ENCODE measurements at regions of chr1 and their contacts with region 1.

Region 1: DNA sequence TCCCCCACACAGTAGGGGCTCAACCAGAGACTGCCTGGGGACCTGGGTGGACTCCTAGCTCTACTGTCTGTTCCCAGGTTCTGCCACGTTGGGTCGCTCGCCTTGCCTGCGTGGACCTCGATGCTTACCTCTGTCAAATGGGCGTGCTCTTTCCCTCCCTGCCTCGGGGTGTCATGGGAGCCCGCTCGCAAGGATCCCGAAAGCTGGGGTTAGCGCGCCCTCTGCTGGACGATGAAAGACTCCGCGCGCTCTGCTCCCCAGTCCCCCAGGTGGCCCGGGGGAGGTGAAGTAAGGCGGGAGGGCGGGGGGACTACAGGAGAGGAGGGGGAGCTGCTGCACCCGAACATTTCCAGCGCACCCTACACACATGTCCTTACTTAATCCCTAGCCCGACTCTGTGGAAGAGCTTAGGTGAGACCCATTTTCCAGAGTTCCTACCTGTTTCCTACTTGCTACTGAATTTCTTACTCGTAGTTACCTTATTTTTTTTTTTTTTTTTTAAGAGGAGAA is 2.3 kb upstream of the BSND start:
- DNase-seq: peak; percentile 86
- H3K4me3 ChIP-seq: no peak overlapping the region
- H3K27ac ChIP-seq: no peak overlapping the region
- H3K4me1 ChIP-seq: no peaks in the 10 kb centered on the region
- H3K27me3 ChIP-seq: peaks cover 5% of the 10 kb centered on the region
- CTCF ChIP-seq: peak; percentile 68

Region 2: DNA sequence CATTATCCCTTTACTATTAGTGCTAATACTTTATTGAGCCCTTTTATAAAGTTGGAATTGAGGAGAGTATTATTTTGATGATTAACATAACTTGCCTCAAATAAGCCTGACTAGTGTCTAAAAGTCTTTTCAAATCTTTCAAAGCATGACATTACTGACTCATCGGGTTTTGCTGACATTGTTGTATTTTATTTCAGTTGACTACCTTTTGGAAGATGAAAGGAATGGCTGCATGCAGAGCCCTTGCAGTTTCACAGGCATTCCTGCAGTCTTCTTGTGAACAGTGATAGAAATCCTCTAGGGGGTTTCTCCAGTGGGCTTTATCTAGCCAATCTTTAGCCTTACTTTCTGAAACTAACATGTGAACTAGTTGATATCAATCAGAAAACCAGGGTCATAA is 58.9 kb before region 1 on chr1:
- intact Hi-C with region 1: no loop called
- DNase-seq: no peak
- H3K4me3 ChIP-seq: no peak overlapping the region
- H3K27ac ChIP-seq: no peak overlapping the region
- H3K4me1 ChIP-seq: no peaks in the 10 kb centered on the region
- H3K27me3 ChIP-seq: no peaks in the 10 kb centered on the region
- CTCF ChIP-seq: no peak

Region 3: GRCh38 chr1:54950369-54951163 is 45.8 kb before region 1 on chr1:
- intact Hi-C with region 1: loop called (anchors 1 kb)
- DNase-seq: peak; percentile 87
- H3K4me3 ChIP-seq: no peak overlapping the region
- H3K27ac ChIP-seq: no peak overlapping the region
- H3K4me1 ChIP-seq: no peaks in the 10 kb centered on the region
- H3K27me3 ChIP-seq: no peaks in the 10 kb centered on the region
- CTCF ChIP-seq: peak; percentile 64